ENCODE measurements at regions of chr11 and their contacts with region 1.

Region 1: GRCh38 chr11:59615637-59616395 is at the start of gene OSBP:
- DNase-seq: peak; percentile 100
- H3K4me3 Mint-ChIP-seq: peak within 1 kb of the TSS; percentile 77
- H3K27ac Mint-ChIP-seq: peak within 1 kb of the TSS; percentile 89
- H3K4me1 Mint-ChIP-seq: peaks cover 24% of the 10 kb centered on the region
- H3K27me3 Mint-ChIP-seq: no peaks in the 10 kb centered on the region
- CTCF ChIP-seq: no peak
- total RNA-seq, gene OSBP: 73.7 and 76.1 TPM in 2 replicates

Region 2: GRCh38 chr11:59550368-59550841 is 65.4 kb before region 1 on chr11:
- CTCF ChIA-PET with region 1: interaction called, 4 read pairs
- POLR2A ChIA-PET with region 1: interaction called, 47 read pairs
- intact Hi-C with region 1: loop called (anchors 1 kb)
- DNase-seq: peak; percentile 93
- H3K4me3 Mint-ChIP-seq: peak overlapping the region; percentile 92
- H3K27ac Mint-ChIP-seq: peak overlapping the region; percentile 98
- H3K4me1 Mint-ChIP-seq: peaks cover 21% of the 10 kb centered on the region
- H3K27me3 Mint-ChIP-seq: no peaks in the 10 kb centered on the region
- CTCF ChIP-seq: peak; percentile 40

Region 3: DNA sequence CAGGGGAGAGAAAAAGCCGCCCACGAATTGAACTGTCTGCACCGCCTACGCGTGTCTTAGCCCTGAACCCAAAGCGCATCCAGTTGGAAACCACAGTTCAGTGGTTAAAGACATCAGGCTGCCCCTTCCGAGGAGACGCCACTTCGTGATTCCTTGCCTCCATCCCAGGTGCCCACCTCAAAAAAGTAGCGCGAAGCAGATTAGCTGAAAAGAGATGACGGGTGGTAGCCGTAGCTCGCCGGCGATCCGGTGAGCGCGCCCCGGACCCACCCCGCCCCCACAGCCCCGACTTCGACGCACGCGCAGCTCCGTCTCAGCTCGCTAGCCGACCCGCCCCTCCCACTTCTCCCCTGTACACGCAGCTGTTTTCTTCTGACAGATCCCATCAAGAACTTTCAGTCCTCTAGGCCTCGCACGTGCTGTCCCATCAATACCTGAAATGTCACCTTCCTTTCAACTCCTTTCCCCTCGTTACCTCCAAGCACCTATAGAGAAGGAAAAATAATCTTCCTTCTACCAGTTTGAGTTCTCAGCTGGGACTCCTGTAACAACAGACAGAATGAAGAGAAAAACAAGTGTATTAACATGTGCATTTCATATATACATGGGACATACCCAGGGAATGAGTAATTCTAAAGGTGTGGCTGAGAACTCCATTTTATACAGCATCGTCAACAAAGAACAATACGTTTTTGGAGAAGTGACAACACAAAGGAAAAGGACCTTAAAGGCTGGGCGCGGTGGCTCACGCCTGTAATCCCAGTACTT is 54.9 kb before region 1 on chr11:
- CTCF ChIA-PET with region 1: no interaction called
- POLR2A ChIA-PET with region 1: interaction called, 85 read pairs
- intact Hi-C with region 1: loop called (anchors 2 kb)
- DNase-seq: peak; percentile 88
- H3K4me3 Mint-ChIP-seq: peak overlapping the region; percentile 78
- H3K27ac Mint-ChIP-seq: peak overlapping the region; percentile 99
- H3K4me1 Mint-ChIP-seq: peaks cover 13% of the 10 kb centered on the region
- H3K27me3 Mint-ChIP-seq: no peaks in the 10 kb centered on the region
- CTCF ChIP-seq: no peak

Region 4: GRCh38 chr11:59573234-59573633 is 42.6 kb before region 1 on chr11:
- CTCF ChIA-PET with region 1: no interaction called
- POLR2A ChIA-PET with region 1: interaction called, 12 read pairs
- intact Hi-C with region 1: no loop called
- DNase-seq: peak; percentile 58
- H3K4me3 Mint-ChIP-seq: no peak overlapping the region
- H3K27ac Mint-ChIP-seq: peak overlapping the region; percentile 78
- H3K4me1 Mint-ChIP-seq: peaks cover 19% of the 10 kb centered on the region
- H3K27me3 Mint-ChIP-seq: no peaks in the 10 kb centered on the region
- CTCF ChIP-seq: no peak

Region 5: DNA sequence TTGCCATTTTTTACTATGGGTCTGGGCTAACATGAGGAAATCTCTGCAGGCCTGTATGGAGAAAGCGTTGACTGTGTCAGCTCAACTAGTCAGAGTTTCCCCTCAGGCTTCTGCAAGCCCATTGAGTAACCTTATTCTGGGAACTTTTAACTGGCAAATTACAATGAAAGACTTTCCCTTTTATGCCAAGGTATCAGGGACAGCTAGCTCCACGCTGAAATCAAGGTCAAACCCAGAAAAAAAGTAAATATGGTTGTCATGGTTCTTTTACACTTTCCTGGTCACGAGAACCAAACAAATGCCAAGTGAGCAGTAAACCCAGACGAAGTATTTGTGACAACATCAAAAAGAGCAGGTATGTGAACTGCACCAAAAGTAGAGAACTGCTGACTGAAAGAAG is 14.0 kb before region 1 on chr11:
- CTCF ChIA-PET with region 1: interaction called, 4 read pairs
- POLR2A ChIA-PET with region 1: interaction called, 7 read pairs
- intact Hi-C with region 1: loop called (anchors 2 kb)
- DNase-seq: no peak
- H3K4me3 Mint-ChIP-seq: no peak overlapping the region
- H3K27ac Mint-ChIP-seq: no peak overlapping the region
- H3K4me1 Mint-ChIP-seq: no peaks in the 10 kb centered on the region
- H3K27me3 Mint-ChIP-seq: no peaks in the 10 kb centered on the region
- CTCF ChIP-seq: no peak

Region 6: DNA sequence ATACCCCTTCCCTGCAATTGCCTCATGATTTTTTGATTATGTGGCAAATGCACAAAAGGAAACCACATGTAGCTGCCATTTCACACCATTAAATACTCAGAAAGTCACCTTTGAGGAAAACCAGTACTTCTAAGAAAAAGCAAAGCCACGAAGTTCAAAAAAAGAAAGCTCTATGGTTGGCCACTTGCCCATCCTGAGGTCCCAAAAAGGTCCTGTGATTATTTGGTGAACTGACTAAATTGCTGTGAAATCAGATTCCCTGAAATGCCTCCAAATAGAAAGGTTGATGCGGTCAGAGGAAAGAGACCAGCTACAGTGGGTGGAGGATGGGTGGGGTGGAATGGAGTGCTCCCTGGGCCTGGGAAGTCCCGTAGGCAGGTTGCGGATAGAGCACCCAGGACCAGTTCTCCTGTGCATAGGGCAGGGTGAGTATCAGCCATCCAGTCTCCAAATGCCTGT is 167.8 kb after region 1 on chr11:
- CTCF ChIA-PET with region 1: no interaction called
- POLR2A ChIA-PET with region 1: no interaction called
- intact Hi-C with region 1: no loop called
- DNase-seq: no peak
- H3K4me3 Mint-ChIP-seq: no peak overlapping the region
- H3K27ac Mint-ChIP-seq: no peak overlapping the region
- H3K4me1 Mint-ChIP-seq: peaks cover 14% of the 10 kb centered on the region
- H3K27me3 Mint-ChIP-seq: no peaks in the 10 kb centered on the region
- CTCF ChIP-seq: no peak